ENCODE measurements at regions of chr2 and their contacts with region 1.

Region 1: DNA sequence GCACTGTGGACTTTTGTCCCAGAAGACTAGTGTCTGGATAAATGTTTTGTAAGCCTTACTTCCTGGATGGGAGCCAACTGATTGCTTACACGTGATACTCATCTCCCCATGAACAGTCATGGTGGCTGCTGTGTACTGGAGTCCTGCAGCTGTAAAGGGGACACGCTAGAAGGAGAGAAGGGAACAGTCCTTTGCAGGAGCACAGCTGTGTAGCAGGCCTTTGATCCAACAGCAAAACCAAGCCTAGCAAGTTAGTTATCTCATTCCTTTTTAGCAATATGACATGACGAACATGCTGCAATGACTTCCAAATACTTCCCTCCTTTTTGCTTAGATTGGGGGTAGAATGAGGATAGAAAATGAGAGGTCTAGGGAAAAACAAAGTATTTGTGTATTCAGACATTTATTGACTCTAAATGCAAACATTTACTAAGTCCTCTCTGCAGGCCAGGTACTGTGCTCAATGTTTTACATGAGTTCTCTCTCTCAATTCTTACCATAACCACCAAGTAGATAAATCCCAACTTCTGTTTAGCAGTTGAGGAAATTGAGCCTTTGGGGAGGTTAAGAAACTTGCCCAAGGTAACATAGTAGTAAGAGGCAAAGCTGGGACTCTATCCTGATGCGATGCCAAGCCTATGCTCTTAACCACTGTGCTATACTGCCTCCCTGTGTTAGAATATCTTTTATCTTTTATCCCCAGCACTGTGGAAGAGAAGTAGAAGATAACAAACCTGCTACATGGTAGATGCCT is 55.4 kb upstream of the CD28 start:
- DNase-seq: peak; percentile 84
- H3K4me3 ChIP-seq: no peak overlapping the region
- H3K27ac ChIP-seq: peak overlapping the region; percentile 55
- H3K4me1 ChIP-seq: peaks cover 56% of the 10 kb centered on the region
- CTCF ChIP-seq: peak; percentile 89

Region 2: DNA sequence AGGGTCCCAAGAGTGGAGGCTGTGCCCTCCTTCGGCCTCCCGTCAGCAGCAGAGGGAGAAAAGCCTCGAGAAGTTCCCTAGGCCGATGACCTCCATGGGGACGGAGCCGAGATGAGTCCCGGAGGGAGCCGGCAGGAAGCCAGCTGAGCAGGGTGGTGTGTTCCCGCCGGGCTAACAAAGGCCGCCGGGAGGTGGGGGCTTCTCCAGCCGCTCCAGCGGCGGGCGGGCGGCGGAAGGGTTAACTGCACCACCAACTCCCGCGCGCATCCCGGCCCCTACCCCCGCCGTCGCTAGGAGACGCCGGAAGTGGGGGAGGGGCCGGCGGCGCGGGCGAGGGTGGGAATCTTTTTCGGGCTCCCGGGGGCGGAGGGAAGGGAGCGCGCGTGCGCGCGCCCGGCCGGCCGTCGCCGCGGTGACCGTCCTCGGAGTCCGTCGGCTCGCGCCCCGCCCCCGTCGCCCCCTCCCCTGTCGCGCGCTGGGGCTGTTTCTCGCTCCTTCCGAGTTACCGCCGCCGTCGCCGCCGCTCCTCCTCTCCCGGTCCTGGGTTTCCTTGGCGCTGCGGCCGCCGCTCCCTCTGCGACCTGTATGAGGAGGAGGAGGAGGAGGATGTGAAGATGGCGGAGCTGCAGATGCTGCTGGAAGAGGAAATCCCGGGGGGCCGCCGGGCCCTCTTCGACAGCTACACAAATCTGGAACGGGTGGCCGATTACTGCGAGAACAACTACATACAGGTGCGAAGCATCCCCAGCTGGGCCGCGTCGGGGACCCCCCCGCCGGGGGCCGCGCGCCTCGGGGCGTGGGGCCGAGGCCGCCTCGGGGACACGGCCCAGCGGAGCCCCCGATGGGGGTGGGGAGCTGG is 322.9 kb before region 1 on chr2 and contains the start of gene ABI2:
- CTCF ChIA-PET with region 1: no interaction called
- POLR2A ChIA-PET with region 1: no interaction called
- intact Hi-C with region 1: loop called (anchors 10 kb)
- DNase-seq: peak; percentile 78
- H3K4me3 ChIP-seq: peak within 1 kb of the TSS; percentile 83
- H3K27ac ChIP-seq: peak within 1 kb of the TSS; percentile 52
- H3K4me1 ChIP-seq: peaks cover 30% of the 10 kb centered on the region
- CTCF ChIP-seq: no peak
- total RNA-seq, gene ABI2: 24.0 and 37.9 TPM in 2 replicates

Region 3: DNA sequence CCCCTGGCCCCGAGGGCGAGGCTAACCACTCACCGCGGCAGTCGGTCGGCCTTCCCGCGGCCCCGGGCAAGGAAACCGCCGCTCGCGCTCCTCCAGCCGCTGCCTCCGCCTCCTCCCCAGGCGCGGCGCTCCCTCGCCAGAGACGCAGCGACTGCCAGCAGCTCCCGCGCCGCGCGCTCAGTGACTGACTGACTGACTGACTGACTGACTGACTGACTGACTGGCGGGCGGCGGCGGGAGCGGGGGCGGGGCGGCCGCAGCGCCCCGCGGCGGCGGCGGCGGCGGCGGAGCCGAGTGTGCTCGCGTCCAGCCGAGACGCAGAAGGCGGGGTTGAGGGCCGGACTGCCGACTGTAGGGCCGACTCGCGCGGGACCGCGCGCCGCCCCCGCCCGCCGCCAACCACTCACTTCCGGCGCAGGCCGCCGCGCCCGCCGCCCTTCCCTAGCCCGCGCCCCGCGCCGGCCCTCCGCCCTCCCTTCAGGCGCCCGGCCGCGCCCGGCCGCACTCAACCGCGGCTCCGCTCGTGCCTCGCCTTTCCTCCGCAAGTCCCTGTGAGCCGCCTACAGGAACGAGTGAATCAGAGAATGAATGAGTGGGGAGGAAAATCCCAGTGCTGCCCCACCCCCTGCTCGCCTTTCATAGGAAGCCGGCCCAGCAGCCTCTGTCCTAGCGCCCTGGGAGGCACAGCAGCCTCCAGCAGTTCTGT is 115.8 kb before region 1 on chr2 and contains the start of gene RAPH1:
- CTCF ChIA-PET with region 1: no interaction called
- POLR2A ChIA-PET with region 1: interaction called, 4 read pairs
- intact Hi-C with region 1: loop called (anchors 1 kb)
- DNase-seq: peak; percentile 82
- H3K4me3 ChIP-seq: peak within 1 kb of the TSS; percentile 90
- H3K27ac ChIP-seq: peak within 1 kb of the TSS; percentile 58
- H3K4me1 ChIP-seq: peaks cover 31% of the 10 kb centered on the region
- CTCF ChIP-seq: no peak
- total RNA-seq, gene RAPH1: 4.0 and 4.5 TPM in 2 replicates

Region 4: DNA sequence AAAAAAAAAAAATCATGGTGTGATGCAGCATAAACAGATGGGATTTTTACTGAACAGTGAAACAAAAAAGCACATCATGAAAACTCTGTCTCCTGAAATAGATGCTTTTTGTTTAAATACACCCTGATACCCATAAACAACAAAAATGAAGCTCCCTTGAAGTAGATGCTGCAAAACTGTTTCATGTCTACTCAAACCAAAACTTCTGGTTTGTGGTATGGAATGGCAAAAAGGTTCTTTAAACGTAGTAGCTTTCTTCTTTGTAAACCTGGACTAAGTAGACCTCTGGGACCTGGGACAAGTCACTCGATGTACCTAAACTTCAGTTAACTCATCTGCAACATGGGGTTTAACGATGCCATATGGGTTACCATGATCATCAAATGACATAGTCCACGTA is 51.5 kb before region 1 on chr2:
- CTCF ChIA-PET with region 1: no interaction called
- POLR2A ChIA-PET with region 1: interaction called, 12 read pairs
- intact Hi-C with region 1: loop called (anchors 5 kb)
- DNase-seq: no peak
- H3K4me3 ChIP-seq: peak overlapping the region; percentile 61
- H3K27ac ChIP-seq: peak overlapping the region; percentile 91
- H3K4me1 ChIP-seq: peaks cover 61% of the 10 kb centered on the region
- CTCF ChIP-seq: no peak

Region 5: DNA sequence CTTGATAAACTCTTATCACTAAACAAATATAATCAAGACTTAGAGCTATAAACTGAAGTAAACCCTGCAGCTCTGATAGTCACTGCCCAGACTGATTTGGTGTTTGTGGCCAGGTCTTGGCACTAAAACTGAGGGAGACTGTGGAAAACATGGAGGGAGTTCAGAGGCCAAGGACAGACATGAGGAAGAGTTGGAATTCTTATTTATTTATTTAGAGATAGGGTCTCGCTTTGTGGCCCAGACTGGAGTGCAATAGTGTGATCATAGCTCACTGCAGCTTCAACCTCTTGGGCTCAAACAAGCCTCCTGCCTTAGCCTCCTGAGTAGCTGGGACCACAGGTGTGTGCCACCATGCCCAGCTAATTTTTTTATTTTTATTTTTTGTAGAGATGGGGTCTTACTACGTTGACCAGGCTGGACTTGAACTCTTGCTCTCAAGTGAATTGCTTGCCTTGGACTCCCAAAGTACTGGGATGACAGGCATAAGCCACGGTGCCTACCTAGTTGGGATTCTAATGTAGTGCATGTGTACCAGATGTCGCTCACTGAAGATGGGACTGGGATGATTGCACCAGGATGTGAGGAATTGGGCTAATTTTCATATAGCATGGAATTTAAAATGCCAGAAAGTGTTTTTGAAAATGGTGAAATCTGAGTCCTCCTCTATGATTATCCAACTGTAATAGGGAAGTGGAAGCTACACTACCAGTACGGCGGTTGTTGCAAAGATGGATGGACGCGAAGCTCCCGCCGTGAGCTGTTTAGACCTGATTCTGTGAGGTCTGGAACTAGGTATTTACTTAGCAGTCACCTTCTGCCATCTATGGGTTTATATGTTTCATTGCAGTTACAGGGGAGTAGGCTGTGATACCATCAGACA is 163.9 kb after region 1 on chr2:
- CTCF ChIA-PET with region 1: interaction called, 3 read pairs
- POLR2A ChIA-PET with region 1: interaction called, 6 read pairs
- intact Hi-C with region 1: loop called (anchors 1 kb)
- DNase-seq: peak; percentile 89
- H3K4me3 ChIP-seq: peak overlapping the region; percentile 13
- H3K27ac ChIP-seq: no peak overlapping the region
- H3K4me1 ChIP-seq: peaks cover 35% of the 10 kb centered on the region
- CTCF ChIP-seq: peak; percentile 96

Region 6: DNA sequence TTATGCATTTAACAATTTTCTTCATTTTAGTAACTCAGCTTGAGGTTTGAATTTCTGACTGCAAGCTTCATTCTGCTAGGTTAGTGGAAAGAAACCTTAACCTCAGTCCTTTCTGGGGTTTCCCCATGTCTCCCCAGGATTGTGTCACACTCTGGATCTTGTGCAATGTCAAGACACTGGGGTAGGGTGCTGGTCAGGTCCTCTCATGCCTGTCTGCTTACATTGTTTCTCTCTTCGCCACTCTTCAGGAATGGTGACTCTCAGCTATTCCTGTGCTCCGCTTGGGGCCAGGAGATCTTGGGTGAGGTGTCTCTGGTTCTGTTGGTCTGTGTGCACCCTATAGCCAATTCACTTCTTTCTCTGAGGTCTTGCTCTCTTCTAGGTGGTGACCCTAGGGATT is 240.4 kb after region 1 on chr2:
- CTCF ChIA-PET with region 1: no interaction called
- POLR2A ChIA-PET with region 1: no interaction called
- intact Hi-C with region 1: no loop called
- DNase-seq: no peak
- H3K4me3 ChIP-seq: no peak overlapping the region
- H3K27ac ChIP-seq: no peak overlapping the region
- H3K4me1 ChIP-seq: no peaks in the 10 kb centered on the region
- CTCF ChIP-seq: no peak